ENCODE measurements at regions of chr14 and their contacts with region 1.

Region 1: GRCh38 chr14:35416108-35416750 is 11.7 kb upstream of the NFKBIA start:
- DNase-seq: peak; percentile 75
- ATAC-seq: peak; percentile 75
- H3K4me3 ChIP-seq: no peak overlapping the region; the same call in 1 of the 2 replicates
- H3K27ac ChIP-seq: peak overlapping the region; percentile 62
- H3K4me1 ChIP-seq: peaks cover 31% of the 10 kb centered on the region
- H3K27me3 ChIP-seq: no peaks in the 10 kb centered on the region
- CTCF ChIP-seq: no peak
- EP300 ChIP-seq: peak; percentile 65 to 67; a peak in 2 of 4 replicates
- POLR2A ChIP-seq: no peak
- RAD21 ChIP-seq: no peak

Region 2: GRCh38 chr14:34781242-34781641 is 635.0 kb before region 1 on chr14:
- CTCF ChIA-PET with region 1: interaction called, 3 read pairs
- POLR2A ChIA-PET with region 1: no interaction called
- RAD21 ChIA-PET with region 1: no interaction called
- SMC1A ChIA-PET with region 1: interaction called, 4 read pairs
- in situ Hi-C with region 1: no loop called
- intact Hi-C with region 1: loop called (anchors 10 kb)
- DNase-seq: peak; percentile 4
- ATAC-seq: peak; percentile 61
- H3K4me3 ChIP-seq: no peak overlapping the region
- H3K27ac ChIP-seq: no peak overlapping the region
- H3K4me1 ChIP-seq: peaks cover 10% of the 10 kb centered on the region; the same call in 1 of the 2 replicates
- H3K27me3 ChIP-seq: no peaks in the 10 kb centered on the region
- CTCF ChIP-seq: no peak
- EP300 ChIP-seq: no peak
- POLR2A ChIP-seq: no peak
- RAD21 ChIP-seq: no peak

Region 3: DNA sequence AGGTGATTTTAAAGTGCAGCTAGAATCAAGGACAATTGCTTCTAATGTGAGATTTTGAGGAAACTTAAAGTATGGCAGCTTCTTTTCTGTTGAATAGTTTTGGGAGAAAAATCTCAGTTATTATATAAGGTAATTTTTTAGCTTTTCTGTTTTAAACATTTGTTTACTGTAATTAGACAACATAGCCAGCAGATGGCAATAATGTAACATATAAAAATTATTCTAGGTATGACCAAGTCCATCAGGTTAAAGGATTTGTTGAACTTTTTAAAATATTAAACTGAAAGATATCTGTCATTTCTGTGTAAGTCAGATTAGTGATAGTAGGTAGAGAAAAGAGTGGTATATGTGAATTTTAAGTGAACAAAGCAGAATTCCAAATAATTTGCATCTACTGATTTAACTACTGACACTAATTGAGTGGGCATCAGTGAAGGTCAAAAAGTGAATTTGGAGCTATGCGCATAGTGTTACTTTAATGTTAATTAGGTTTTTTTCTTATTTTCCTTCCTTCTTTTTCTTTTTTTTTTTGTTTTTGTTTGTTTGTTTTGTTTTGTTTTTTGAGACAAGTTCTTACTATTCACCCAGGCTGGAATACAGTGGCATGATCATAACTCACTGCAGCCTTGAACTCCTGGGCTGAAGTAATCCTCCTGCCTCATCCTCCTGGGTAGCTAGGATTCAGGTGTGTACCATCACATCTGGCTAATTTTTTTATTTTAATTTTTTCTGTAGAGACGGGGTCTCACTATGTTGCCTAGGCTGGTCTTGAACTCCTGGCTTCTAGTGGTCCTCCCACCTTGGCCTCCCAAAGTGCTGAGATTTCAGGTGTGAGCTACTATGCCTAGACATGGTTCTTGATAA is 275.3 kb before region 1 on chr14:
- CTCF ChIA-PET with region 1: interaction called, 324 read pairs
- POLR2A ChIA-PET with region 1: interaction called, 7 read pairs
- RAD21 ChIA-PET with region 1: interaction called, 257 read pairs
- SMC1A ChIA-PET with region 1: interaction called, 362 read pairs
- in situ Hi-C with region 1: no loop called
- intact Hi-C with region 1: loop called (anchors 1 kb)
- DNase-seq: no peak
- ATAC-seq: peak; percentile 60
- H3K4me3 ChIP-seq: no peak overlapping the region
- H3K27ac ChIP-seq: no peak overlapping the region
- H3K4me1 ChIP-seq: peaks cover 10% of the 10 kb centered on the region
- H3K27me3 ChIP-seq: no peaks in the 10 kb centered on the region
- CTCF ChIP-seq: peak in 2 of 3 experiments; percentile 11 to 23; a peak in 3 of 6 replicates
- EP300 ChIP-seq: no peak
- POLR2A ChIP-seq: no peak
- RAD21 ChIP-seq: peak; percentile 60

Region 4: GRCh38 chr14:35215110-35215876 is 200.9 kb before region 1 on chr14:
- CTCF ChIA-PET with region 1: interaction called, 23 read pairs
- POLR2A ChIA-PET with region 1: no interaction called
- RAD21 ChIA-PET with region 1: interaction called, 12 read pairs
- SMC1A ChIA-PET with region 1: interaction called, 10 read pairs
- in situ Hi-C with region 1: no loop called
- intact Hi-C with region 1: no loop called
- DNase-seq: no peak
- ATAC-seq: peak; percentile 63
- H3K4me3 ChIP-seq: no peak overlapping the region
- H3K27ac ChIP-seq: no peak overlapping the region
- H3K4me1 ChIP-seq: no peaks in the 10 kb centered on the region
- H3K27me3 ChIP-seq: no peaks in the 10 kb centered on the region
- CTCF ChIP-seq: peak; percentile 24 to 61 (median 31); a peak in 5 of 6 replicates
- EP300 ChIP-seq: no peak
- POLR2A ChIP-seq: no peak
- RAD21 ChIP-seq: peak; percentile 69

Region 5: GRCh38 chr14:35285168-35286002 is 130.8 kb before region 1 on chr14:
- CTCF ChIA-PET with region 1: interaction called, 18 read pairs
- POLR2A ChIA-PET with region 1: interaction called, 8 read pairs
- RAD21 ChIA-PET with region 1: interaction called, 32 read pairs
- SMC1A ChIA-PET with region 1: interaction called, 25 read pairs
- in situ Hi-C with region 1: no loop called
- intact Hi-C with region 1: no loop called
- DNase-seq: peak; percentile 95
- ATAC-seq: peak; percentile 82
- H3K4me3 ChIP-seq: peak overlapping the region; percentile 51; the same call in 1 of the 2 replicates
- H3K27ac ChIP-seq: peak overlapping the region; percentile 91
- H3K4me1 ChIP-seq: peaks cover 53% of the 10 kb centered on the region
- H3K27me3 ChIP-seq: no peaks in the 10 kb centered on the region
- CTCF ChIP-seq: no peak
- EP300 ChIP-seq: peak; percentile 70 to 73; a peak in 3 of 4 replicates
- POLR2A ChIP-seq: no peak
- RAD21 ChIP-seq: peak; percentile 19; the same call in 1 of the 2 replicates

Region 6: GRCh38 chr14:35458442-35458841 is 42.2 kb after region 1 on chr14:
- CTCF ChIA-PET with region 1: no interaction called
- POLR2A ChIA-PET with region 1: no interaction called
- RAD21 ChIA-PET with region 1: no interaction called
- SMC1A ChIA-PET with region 1: no interaction called
- in situ Hi-C with region 1: no loop called
- intact Hi-C with region 1: no loop called
- DNase-seq: no peak
- ATAC-seq: no peak
- H3K4me3 ChIP-seq: no peak overlapping the region
- H3K27ac ChIP-seq: no peak overlapping the region
- H3K4me1 ChIP-seq: no peaks in the 10 kb centered on the region
- H3K27me3 ChIP-seq: no peaks in the 10 kb centered on the region
- CTCF ChIP-seq: no peak
- EP300 ChIP-seq: no peak
- POLR2A ChIP-seq: no peak
- RAD21 ChIP-seq: no peak

Region 7: DNA sequence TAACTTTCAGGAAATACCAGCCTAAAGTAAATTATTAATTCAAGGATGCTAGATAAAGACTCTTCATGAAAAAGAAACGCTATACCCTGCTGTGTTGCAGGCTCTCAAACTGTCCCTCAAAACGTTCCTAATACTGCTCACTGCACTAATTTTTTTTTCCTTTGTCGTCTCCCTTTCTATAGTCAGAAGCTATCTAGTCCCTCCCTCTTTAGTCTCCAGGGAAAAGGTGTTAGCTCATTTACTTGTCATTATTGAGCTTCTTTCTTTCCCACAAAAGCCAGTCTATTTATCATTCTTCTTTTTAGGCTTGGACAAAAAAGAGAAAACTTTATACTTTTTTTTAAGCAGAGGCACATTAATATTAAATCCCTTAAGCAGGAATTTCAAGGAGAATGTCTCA is 87.4 kb after region 1 on chr14:
- CTCF ChIA-PET with region 1: no interaction called
- POLR2A ChIA-PET with region 1: no interaction called
- RAD21 ChIA-PET with region 1: no interaction called
- SMC1A ChIA-PET with region 1: no interaction called
- in situ Hi-C with region 1: no loop called
- intact Hi-C with region 1: no loop called
- DNase-seq: no peak
- ATAC-seq: no peak
- H3K4me3 ChIP-seq: no peak overlapping the region
- H3K27ac ChIP-seq: no peak overlapping the region
- H3K4me1 ChIP-seq: no peaks in the 10 kb centered on the region
- H3K27me3 ChIP-seq: no peaks in the 10 kb centered on the region
- CTCF ChIP-seq: no peak
- EP300 ChIP-seq: no peak
- POLR2A ChIP-seq: no peak
- RAD21 ChIP-seq: no peak

Region 8: DNA sequence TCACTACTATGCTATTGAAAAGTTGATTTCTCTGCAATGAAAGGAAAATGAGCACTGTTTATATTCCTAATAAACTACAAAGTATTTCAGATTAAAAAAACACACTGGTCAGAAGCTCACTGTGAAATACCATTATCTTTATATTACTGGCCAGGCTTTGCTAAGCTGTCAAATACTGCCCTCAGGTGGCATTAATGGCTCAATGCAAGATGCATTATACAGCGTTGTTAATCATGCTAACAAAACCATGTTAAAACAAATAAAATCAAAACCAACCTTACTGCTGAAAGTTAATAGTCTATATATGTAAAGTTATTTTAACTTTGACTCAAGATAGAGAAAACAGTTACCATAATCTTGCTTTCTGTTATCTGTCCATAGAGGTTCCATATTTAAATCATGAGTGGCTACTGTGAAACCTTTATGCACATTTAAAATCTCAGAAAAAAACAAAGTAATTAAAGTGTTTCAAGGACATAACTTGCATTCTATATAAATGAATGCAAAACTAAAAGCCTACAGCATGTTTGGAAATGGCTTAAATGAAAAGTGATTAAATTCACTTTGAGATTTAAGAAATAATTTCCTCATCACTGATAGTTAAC is 271.2 kb after region 1 on chr14:
- CTCF ChIA-PET with region 1: interaction called, 14 read pairs
- POLR2A ChIA-PET with region 1: no interaction called
- RAD21 ChIA-PET with region 1: interaction called, 32 read pairs
- SMC1A ChIA-PET with region 1: interaction called, 20 read pairs
- in situ Hi-C with region 1: no loop called
- intact Hi-C with region 1: loop called (anchors 5 kb)
- DNase-seq: peak; percentile 2
- ATAC-seq: peak; percentile 90
- H3K4me3 ChIP-seq: no peak overlapping the region
- H3K27ac ChIP-seq: no peak overlapping the region
- H3K4me1 ChIP-seq: peaks cover 15% of the 10 kb centered on the region; the same call in 1 of the 2 replicates
- H3K27me3 ChIP-seq: no peaks in the 10 kb centered on the region
- CTCF ChIP-seq: peak; percentile 71 to 89 (median 89)
- EP300 ChIP-seq: no peak
- POLR2A ChIP-seq: no peak
- RAD21 ChIP-seq: peak; percentile 99

Measured in GM12878 (cell line).